MCF 10A (cell line): ENCODE measurements at regions of chr16 and their contacts with region 1.

Region 1: GRCh38 chr16:2340564-2341455 is at the start of gene ABCA3:
- DNase-seq: peak; percentile 89
- H3K4me3 Mint-ChIP-seq: peak within 1 kb of the TSS; percentile 64
- H3K27ac Mint-ChIP-seq: no peak within 1 kb of the TSS
- H3K4me1 Mint-ChIP-seq: no peaks in the 10 kb centered on the region
- H3K27me3 Mint-ChIP-seq: no peaks in the 10 kb centered on the region
- CTCF ChIP-seq: peak; percentile 99
- total RNA-seq, gene ABCA3: 3.5 and 4.6 TPM in 2 replicates

Region 2: DNA sequence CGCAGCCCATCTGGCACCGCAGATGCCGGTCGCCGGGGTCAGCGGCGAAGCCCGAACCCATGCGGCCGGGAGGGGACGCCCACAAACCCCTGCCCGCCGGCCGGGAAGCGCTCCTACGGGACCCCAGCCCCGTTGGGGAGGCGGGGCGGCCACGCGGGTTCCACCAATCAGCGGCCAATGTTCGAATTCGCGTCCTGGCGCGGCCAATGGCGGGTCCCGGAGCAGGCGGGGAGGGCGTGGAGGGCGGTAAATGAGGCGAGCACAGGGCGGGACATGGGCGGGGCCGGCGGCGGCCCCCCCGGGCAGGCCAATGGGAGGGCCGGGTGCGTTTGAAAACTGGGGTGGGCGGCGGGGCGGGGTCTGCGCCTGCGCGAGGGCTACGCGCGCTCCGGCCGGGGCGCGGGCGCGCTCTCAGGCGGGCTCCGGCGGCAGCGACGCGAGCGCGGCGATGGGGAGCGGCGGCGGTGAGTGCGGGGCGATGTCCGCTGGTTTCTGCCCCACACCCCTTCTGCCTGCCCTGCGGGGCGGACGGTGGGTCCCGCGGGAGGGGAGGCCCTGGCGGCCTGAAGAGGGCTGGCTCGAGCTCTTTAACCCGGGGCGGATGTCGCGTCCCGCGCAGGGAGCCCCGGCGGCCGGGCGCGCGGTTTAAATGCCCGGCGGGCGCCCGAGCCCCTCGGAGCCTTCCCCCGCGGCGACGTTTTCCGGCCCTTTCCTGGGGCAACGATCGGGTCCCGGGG is 88.4 kb after region 1 on chr16 and contains the start of gene CCNF:
- CTCF ChIA-PET with region 1: no interaction called
- POLR2A ChIA-PET with region 1: interaction called, 3 read pairs
- intact Hi-C with region 1: loop called (anchors 1 kb)
- DNase-seq: peak; percentile 94
- H3K4me3 Mint-ChIP-seq: peak within 1 kb of the TSS; percentile 86
- H3K27ac Mint-ChIP-seq: peak within 1 kb of the TSS; percentile 16
- H3K4me1 Mint-ChIP-seq: peaks cover 20% of the 10 kb centered on the region
- H3K27me3 Mint-ChIP-seq: no peaks in the 10 kb centered on the region
- CTCF ChIP-seq: no peak
- total RNA-seq, gene CCNF: 7.5 and 11.9 TPM in 2 replicates

Region 3: GRCh38 chr16:2459647-2460390 is 119.0 kb after region 1 on chr16 and contains the start of gene TEDC2:
- CTCF ChIA-PET with region 1: no interaction called
- POLR2A ChIA-PET with region 1: no interaction called
- intact Hi-C with region 1: no loop called
- DNase-seq: peak; percentile 96
- H3K4me3 Mint-ChIP-seq: peak within 1 kb of the TSS; percentile 77
- H3K27ac Mint-ChIP-seq: peak within 1 kb of the TSS; percentile 82
- H3K4me1 Mint-ChIP-seq: peaks cover 7% of the 10 kb centered on the region
- H3K27me3 Mint-ChIP-seq: no peaks in the 10 kb centered on the region
- CTCF ChIP-seq: no peak
- total RNA-seq, gene TEDC2: 3.5 and 6.9 TPM in 2 replicates